AG04449 (cell line): ENCODE measurements at regions of chr2 and their contacts with region 1.

Region 1: DNA sequence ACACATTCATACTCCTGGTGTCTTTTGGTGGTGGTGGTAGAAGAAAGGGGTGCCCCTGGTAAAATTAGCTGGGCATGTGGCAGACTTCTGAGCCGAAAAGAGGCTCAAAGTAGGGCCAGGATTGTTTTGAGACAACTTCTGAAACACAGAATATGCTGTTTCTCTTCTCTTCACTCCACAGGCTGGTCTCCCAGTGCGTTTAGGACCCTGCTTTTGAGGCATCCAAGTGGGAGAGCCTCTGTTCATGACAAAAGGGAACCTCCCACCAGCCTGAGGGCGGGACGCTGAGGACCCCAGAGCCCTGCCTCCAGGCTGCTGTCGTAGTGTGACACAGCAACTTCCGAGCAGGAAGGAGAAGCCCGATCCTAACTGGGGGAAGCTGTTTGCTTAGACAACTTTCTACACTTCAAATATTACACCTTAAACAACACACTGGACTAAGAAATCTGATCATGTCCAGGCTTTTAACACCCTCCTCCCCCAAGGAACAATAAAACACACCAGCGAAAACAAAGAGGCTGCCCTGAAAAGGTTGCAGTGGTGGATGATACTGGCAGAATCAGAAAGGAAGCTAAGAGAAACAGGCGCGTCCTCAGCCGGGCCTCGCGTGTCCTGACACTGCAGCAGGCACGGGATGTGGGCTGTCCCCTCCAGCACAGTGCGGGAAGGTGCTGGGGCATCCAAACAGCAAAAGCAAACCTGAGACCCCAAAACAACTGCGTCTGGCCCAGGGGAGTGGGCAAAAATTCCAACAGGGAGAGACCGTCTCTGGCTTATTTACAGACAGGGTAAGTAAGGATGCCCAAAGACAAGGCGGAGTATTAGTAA is 9.3 kb downstream of the SERTAD2 start:
- DNase-seq: no peak
- H3K4me3 ChIP-seq: peak overlapping the region; percentile 57
- CTCF ChIP-seq: no peak

Region 2: DNA sequence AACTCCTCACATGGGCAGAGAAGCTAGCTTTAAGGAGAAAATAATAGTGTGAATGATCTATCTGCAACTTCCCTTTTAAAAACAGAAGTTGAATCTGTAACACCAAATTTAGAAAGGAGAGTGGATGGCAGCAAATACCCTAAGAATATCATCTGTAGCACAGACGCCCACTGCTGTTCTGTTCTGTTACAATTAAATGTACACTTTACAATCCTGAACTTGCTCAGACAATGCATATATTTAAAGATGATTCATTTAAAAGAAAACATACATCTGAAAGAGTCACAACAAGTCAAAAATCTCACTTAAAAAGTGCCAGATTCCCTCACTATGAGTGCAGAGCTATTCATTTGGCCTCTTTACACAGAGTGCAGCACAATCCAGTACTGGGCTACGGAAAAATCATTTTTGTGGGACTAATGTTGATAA is 17.4 kb after region 1 on chr2:
- CTCF ChIA-PET with region 1: interaction called, 53 read pairs
- POLR2A ChIA-PET with region 1: no interaction called
- DNase-seq: no peak
- H3K4me3 ChIP-seq: no peak overlapping the region
- CTCF ChIP-seq: no peak

Region 3: GRCh38 chr2:64807417-64807816 is 163.0 kb after region 1 on chr2:
- CTCF ChIA-PET with region 1: interaction called, 11 read pairs
- POLR2A ChIA-PET with region 1: no interaction called
- DNase-seq: peak; percentile 99
- H3K4me3 ChIP-seq: no peak overlapping the region
- CTCF ChIP-seq: peak; percentile 25

Region 4: GRCh38 chr2:64839844-64840243 is 195.5 kb after region 1 on chr2:
- CTCF ChIA-PET with region 1: interaction called, 12 read pairs
- POLR2A ChIA-PET with region 1: no interaction called
- DNase-seq: no peak
- H3K4me3 ChIP-seq: no peak overlapping the region
- CTCF ChIP-seq: no peak

Region 5: DNA sequence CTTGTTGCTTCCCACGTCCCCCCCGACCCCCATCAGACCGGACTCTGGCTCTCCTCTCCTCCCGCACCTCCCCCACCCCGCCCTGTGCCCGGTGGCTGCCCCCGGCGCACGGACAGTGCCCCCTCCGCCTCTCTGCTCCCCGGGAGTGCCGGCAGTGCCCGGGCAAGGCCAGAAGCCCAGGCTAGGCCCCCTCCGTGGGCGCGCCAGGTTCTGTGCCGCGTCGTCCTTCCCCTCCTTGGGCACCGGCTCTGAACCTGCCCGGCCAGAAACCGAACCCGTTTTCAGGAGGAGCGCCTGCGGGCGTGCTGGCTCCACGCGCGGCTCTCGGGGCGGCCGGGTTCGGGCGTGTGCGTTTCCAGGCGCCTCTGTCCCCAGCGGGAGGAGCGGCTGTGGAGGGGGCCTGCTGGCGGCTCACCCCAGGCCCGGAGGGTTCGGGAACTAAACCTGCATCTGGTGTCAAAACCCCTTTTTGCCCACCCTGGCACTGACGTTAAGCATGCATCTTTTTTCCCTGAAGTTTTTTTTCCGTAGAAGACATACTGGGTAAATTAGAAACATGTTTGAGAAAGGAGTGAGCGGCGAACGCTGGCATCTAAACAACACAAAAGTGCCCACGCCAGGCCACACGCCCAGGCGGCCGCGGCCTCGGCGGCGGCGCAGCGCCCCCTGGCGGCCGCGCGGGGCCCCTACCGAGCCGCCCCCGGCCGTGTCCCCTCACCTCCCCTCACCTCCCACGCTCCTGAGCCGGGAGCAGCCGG is 220.9 kb after region 1 on chr2:
- CTCF ChIA-PET with region 1: interaction called, 128 read pairs
- POLR2A ChIA-PET with region 1: interaction called, 7 read pairs
- DNase-seq: no peak
- H3K4me3 ChIP-seq: peak overlapping the region; percentile 54
- CTCF ChIP-seq: peak; percentile 46